Activated CD4-positive, alpha-beta T cell treated with anti-CD3 and anti-CD28 coated beads, Interleukin-2, amount 10 ng/mL, durations not matched to agents 24 days and 14 days (primary cell): ENCODE measurements at regions of chr16 and their contacts with region 1.

Region 1: DNA sequence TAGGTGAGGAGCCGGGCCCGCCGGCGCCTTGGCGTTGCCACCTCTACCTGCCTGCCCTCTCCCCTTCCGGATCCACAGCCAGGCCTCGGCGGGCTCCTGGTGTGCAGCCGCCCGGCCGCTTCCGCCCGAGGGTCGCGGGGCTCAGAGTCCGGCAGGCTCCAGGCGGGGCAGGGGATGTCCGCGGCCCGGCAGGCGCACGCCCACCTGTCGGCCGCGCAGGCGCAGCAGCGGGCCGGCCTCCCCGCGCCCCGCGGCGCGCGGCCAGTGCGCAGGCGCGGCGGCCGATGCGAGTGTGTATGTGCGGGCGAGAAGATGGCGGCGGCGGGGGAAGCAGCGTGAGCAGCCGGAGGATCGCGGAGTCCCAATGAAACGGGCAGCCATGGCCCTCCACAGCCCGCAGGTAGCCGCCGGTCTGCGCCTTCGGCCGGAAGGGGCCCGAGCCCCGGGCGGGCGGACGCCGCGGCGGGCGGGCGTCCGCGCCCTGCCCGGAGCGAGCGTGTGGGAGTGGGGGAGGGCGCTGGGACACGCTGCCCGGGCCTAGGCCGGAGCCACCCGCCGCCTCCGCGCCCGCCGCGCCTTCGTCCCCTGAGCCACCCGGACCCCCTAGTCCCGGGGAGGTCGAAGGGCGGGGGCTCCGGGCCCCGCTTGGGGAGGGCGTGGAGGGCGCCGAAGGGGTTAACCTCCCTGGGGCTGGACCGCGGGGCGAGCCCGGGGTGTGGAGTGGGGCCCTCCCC is at the start of gene USP10:
- DNase-seq: peak; percentile 97
- H3K4me3 Mint-ChIP-seq: peak within 1 kb of the TSS; percentile 90
- H3K27ac Mint-ChIP-seq: peak within 1 kb of the TSS; percentile 95
- H3K4me1 Mint-ChIP-seq: peaks cover 24% of the 10 kb centered on the region
- H3K27me3 Mint-ChIP-seq: no peaks in the 10 kb centered on the region
- total RNA-seq, gene USP10: 148 and 177 TPM in 2 replicates

Region 2: DNA sequence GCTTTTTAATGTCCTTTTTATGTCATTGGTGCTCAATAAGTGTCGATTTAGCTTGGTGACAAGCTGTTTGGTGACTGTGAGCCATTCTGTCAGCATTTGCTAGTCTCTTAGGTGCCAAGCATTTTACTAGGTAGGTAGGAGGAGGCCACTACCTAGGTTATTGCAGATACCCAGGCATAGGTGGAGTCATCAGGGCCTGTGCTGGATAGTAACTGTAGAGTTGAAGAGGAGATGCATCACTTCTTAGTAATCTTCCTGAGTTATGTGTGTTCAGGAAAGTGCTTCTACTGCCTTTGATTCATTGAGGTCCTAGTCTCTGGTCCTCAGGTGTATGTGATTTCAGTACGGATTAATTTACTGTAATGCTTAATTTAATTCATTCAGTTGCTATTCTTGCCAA is 17.6 kb after region 1 on chr16:
- intact Hi-C with region 1: loop called (anchors 2 kb)
- DNase-seq: no peak
- H3K4me3 Mint-ChIP-seq: no peak overlapping the region
- H3K27ac Mint-ChIP-seq: peak overlapping the region; percentile 6
- H3K4me1 Mint-ChIP-seq: peaks cover 43% of the 10 kb centered on the region
- H3K27me3 Mint-ChIP-seq: no peaks in the 10 kb centered on the region